A549 (cell line): ENCODE measurements at regions of chr4 and their contacts with region 1.

Region 1: GRCh38 chr4:173334085-173334772 is at the start of gene HMGB2:
- DNase-seq: peak; percentile 93 to 99
- ATAC-seq: peak; percentile 89 to 93
- H3K4me3 ChIP-seq: peak within 1 kb of the TSS; percentile 99
- H3K27ac ChIP-seq: peak within 1 kb of the TSS; percentile 94 to 96
- H3K4me1 ChIP-seq: peaks cover 12% of the 10 kb centered on the region; the same call in 2 of the 3 replicates
- CTCF ChIP-seq: no peak
- EP300 ChIP-seq: no peak
- POLR2A ChIP-seq: peak; percentile 80
- RAD21 ChIP-seq: no peak
- polyA plus RNA-seq, gene HMGB2: 67.3 and 128 TPM in 2 replicates

Region 2: GRCh38 chr4:173091362-173091761 is 242.9 kb before region 1 on chr4:
- CTCF ChIA-PET with region 1: no interaction called
- POLR2A ChIA-PET with region 1: no interaction called
- DNase-seq: no peak
- ATAC-seq: no peak
- H3K4me3 ChIP-seq: no peak overlapping the region
- H3K27ac ChIP-seq: no peak overlapping the region
- H3K4me1 ChIP-seq: no peaks in the 10 kb centered on the region
- CTCF ChIP-seq: no peak
- EP300 ChIP-seq: no peak
- POLR2A ChIP-seq: no peak
- RAD21 ChIP-seq: no peak

Region 3: DNA sequence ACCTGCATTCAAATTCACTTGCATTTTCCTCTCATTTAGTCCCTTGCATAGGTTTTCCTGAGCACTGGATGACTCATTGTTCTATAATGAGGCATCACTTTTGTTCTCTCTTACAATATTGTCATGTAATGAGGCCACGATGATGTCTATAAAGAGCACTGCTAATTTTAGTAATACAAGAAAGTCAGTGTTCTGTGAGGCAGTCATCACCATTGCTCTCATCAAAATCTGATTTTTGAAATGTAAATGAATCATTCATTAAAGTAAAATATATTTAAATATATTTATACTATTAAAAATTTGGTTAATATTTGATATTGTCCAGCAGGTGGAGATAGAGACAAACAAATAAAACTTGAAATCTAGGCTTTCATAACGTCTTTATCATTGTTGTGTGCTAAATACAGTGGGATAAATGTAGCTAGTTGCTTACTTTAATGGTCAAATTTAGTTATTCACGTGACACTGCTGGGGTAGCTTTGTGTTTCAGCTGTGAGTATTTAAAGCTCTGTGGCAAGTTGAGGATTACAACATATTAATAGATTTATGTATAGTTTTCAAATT is 15.5 kb before region 1 on chr4:
- CTCF ChIA-PET with region 1: interaction called, 13 read pairs
- POLR2A ChIA-PET with region 1: interaction called, 9 read pairs
- DNase-seq: peak in 1 of 2 experiments; percentile 13
- ATAC-seq: no peak
- H3K4me3 ChIP-seq: no peak overlapping the region
- H3K27ac ChIP-seq: no peak overlapping the region
- H3K4me1 ChIP-seq: peaks cover 8% of the 10 kb centered on the region; the same call in 1 of the 3 replicates
- CTCF ChIP-seq: peak; percentile 51; the same call in 2 of the 3 replicates
- EP300 ChIP-seq: no peak
- POLR2A ChIP-seq: no peak
- RAD21 ChIP-seq: peak; percentile 22 to 53; a peak in 3 of 5 replicates

Region 4: DNA sequence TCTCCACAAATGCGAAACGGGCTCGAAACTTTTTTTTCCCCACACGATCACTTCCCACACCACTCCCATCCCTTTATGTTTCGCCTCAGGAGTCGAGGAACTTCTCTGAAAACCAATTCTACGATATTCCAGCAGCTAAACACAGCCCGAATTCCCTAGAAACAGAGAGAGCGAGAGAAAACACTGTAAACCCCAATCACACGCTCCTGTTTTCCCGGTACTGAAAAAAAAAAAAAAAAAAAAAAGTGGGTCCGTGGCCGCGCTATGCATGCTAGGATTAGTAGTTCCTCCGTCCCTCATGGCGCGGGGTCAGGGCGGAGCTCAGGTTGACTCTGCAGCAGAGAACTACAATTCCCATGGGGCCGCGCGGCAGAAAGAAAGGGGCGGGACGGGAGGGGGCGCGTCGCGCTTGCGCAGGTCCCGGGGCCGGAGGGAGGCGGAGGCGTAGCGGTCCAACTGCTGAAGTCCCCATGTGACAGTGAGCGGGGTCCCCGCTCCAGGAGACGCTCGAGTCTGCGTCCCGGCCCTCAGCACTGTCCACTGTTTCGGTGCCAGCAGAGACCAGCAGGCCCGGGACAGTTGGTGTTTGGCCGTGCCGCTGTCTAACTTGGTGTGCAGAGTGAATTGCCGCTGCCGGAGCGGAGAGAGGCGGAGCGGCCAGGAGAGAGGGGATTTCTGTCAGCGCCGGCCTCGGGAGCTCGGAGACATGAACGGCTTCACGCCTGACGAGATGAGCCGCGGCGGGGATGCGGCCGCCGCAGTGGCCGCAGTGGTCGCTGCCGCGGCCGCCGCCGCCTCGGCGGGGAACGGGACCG is 36.5 kb after region 1 on chr4 and contains the start of gene SAP30:
- CTCF ChIA-PET with region 1: interaction called, 5 read pairs
- POLR2A ChIA-PET with region 1: interaction called, 116 read pairs
- DNase-seq: peak; percentile 73 to 96
- ATAC-seq: peak; percentile 84 to 92
- H3K4me3 ChIP-seq: peak within 1 kb of the TSS; percentile 93
- H3K27ac ChIP-seq: peak within 1 kb of the TSS; percentile 75 to 85
- H3K4me1 ChIP-seq: peaks cover 10% of the 10 kb centered on the region; the same call in 2 of the 3 replicates
- CTCF ChIP-seq: no peak
- EP300 ChIP-seq: no peak
- POLR2A ChIP-seq: peak; percentile 94
- RAD21 ChIP-seq: no peak
- polyA plus RNA-seq, gene SAP30: 12.0 and 19.6 TPM in 2 replicates

Region 5: DNA sequence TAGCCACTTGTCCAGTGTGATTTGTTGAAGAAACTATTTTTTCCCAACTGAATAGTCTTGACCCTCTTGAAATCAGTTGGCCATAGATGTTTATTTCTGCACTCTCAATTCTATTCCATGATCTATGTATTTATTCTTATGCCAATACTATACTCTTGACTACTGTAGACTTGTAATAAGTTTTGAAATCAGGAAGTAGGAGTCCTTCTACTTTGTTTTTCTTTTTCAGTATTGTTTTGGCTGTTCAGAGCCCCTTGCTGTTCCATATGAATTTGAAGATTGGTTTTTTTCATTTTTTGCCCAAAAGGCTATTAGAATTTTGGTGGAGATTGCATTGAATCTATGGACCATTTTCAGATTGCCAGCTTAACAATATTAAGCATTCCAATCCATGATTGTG is 46.8 kb after region 1 on chr4:
- CTCF ChIA-PET with region 1: no interaction called
- POLR2A ChIA-PET with region 1: no interaction called
- DNase-seq: no peak
- ATAC-seq: no peak
- H3K4me3 ChIP-seq: no peak overlapping the region
- H3K27ac ChIP-seq: no peak overlapping the region
- H3K4me1 ChIP-seq: no peaks in the 10 kb centered on the region
- CTCF ChIP-seq: no peak
- EP300 ChIP-seq: no peak
- POLR2A ChIP-seq: no peak
- RAD21 ChIP-seq: no peak

Region 6: DNA sequence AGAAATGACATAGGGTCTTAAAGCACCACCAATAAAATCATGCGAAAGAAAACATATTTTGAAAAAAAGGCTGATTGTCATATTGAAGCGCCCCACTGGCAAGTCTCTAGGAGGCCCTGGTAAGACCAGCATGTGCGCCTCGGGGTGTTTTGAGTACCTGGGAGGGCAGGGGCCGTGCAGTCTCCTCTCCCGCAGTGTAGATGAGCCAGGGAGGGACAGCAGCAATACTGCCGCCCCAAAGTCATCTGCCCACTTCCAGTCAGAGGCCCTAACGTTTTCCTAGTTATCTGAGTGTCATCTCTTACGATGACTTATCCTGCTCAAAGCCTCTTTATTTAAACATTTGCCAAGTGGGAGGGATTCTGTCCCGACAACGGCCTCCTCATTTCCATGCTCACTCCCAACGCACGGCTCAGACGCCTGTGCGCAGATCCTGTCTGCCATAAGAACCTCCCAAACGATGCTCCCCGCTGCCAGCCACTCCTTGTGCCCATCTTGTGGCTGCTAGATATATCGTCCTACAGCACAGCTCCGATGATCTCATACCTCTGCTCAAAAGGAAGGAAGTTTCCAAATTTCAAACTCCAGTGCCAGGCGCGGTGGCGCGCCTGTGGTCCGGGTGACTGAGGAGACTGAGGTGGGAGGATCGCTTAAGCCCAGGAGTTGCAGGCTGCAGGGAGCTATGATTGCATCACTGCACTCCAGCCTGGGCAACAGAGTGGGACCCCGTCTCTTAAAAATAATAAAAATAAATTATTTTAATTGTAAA is 81.8 kb after region 1 on chr4:
- CTCF ChIA-PET with region 1: interaction called, 15 read pairs
- POLR2A ChIA-PET with region 1: interaction called, 5 read pairs
- DNase-seq: no peak
- ATAC-seq: peak in 1 of 2 experiments; percentile 18; a peak in 1 of 6 replicates
- H3K4me3 ChIP-seq: no peak overlapping the region
- H3K27ac ChIP-seq: no peak overlapping the region
- H3K4me1 ChIP-seq: no peaks in the 10 kb centered on the region
- CTCF ChIP-seq: no peak
- EP300 ChIP-seq: no peak
- POLR2A ChIP-seq: no peak
- RAD21 ChIP-seq: no peak